B cell (primary cell): ENCODE measurements at regions of chr20 and their contacts with region 1.

Region 1: DNA sequence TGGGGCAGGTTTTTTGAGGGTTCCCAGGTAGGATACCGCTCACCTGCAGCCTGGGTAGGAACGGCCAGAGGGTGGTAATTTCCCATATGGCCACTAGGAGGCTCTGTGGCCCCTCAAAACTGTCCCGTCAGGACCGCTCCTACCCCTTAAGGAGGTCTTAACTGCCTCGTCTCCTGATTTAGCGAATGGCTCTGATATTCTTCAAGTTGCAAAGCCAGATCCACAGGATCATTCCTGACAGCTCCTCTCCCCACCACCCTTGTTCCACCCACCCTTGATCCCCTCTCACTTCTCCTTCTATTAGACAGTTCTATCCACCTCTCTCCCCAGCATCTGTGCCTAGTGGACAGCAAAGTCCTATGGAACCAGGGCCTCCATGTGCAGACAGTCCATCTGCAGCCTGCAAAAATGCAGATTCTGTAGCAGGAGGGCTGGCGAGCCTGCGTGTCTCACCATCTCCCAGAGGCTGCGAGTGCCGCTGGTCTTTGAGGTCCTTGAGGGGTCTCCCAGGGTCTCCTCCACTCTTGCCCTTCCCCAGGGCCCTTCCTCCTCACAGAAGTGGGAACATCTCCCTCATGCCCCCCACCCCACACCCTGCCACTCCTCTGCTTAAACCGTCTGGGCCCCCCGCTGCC is 34.3 kb upstream of the ZBP1 start:
- DNase-seq: peak; percentile 85
- ATAC-seq: peak; percentile 94
- H3K4me3 ChIP-seq: no peak overlapping the region
- H3K4me3 Mint-ChIP-seq: no peak overlapping the region
- H3K27ac ChIP-seq: no peak overlapping the region
- H3K27ac Mint-ChIP-seq: no peak overlapping the region
- H3K4me1 ChIP-seq: peaks cover 4 to 18% of the 10 kb centered on the region in 2 donors
- H3K4me1 Mint-ChIP-seq: peaks cover 34% of the 10 kb centered on the region
- H3K27me3 ChIP-seq: no peaks in the 10 kb centered on the region
- H3K27me3 Mint-ChIP-seq: no peaks in the 10 kb centered on the region
- CTCF ChIP-seq: peak; percentile 95

Region 2: DNA sequence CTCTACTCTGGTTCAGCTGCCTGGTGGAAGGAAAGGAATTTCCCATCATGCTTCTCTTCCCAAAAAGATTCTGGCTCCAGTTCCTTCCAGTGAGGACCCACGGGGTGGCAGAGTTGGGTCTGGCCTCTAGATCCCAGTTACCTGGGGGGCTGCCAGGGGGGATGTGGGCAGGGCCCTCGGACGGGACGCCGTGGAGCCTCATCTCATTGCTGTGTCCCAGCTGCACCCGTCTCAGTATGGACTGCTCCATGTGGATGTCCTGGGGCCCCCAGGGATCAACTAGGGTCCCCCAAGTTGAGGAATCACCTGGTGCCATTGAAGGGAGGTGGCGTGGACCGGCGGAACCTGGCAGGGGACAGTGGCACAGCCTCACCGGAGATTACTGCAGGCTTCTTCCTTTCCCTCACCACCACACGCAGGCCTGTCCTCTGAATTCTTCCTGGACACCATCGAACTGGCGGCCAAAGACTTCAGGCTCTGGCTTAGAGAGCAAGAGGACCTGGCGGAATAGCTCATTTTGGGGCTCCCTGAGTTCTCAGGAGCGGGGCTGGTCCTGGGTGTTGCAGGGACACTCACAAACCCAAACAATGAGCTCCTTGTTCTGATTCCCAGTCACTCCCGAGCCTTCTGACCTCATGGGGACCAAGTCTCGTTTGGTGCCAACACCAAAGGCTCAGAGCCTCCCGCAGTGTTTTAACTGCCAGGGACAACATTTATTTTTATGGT is 42.7 kb before region 1 on chr20:
- CTCF ChIA-PET with region 1: interaction called, 18 read pairs
- POLR2A ChIA-PET with region 1: no interaction called
- intact Hi-C with region 1: no loop called
- DNase-seq: no peak
- ATAC-seq: no peak
- H3K4me3 ChIP-seq: no peak overlapping the region
- H3K4me3 Mint-ChIP-seq: no peak overlapping the region
- H3K27ac ChIP-seq: no peak overlapping the region
- H3K27ac Mint-ChIP-seq: no peak overlapping the region
- H3K4me1 ChIP-seq: peaks cover 5 to 15% of the 10 kb centered on the region in 2 donors
- H3K4me1 Mint-ChIP-seq: peaks cover 17% of the 10 kb centered on the region
- H3K27me3 ChIP-seq: no peaks in the 10 kb centered on the region
- H3K27me3 Mint-ChIP-seq: no peaks in the 10 kb centered on the region
- CTCF ChIP-seq: no peak

Region 3: DNA sequence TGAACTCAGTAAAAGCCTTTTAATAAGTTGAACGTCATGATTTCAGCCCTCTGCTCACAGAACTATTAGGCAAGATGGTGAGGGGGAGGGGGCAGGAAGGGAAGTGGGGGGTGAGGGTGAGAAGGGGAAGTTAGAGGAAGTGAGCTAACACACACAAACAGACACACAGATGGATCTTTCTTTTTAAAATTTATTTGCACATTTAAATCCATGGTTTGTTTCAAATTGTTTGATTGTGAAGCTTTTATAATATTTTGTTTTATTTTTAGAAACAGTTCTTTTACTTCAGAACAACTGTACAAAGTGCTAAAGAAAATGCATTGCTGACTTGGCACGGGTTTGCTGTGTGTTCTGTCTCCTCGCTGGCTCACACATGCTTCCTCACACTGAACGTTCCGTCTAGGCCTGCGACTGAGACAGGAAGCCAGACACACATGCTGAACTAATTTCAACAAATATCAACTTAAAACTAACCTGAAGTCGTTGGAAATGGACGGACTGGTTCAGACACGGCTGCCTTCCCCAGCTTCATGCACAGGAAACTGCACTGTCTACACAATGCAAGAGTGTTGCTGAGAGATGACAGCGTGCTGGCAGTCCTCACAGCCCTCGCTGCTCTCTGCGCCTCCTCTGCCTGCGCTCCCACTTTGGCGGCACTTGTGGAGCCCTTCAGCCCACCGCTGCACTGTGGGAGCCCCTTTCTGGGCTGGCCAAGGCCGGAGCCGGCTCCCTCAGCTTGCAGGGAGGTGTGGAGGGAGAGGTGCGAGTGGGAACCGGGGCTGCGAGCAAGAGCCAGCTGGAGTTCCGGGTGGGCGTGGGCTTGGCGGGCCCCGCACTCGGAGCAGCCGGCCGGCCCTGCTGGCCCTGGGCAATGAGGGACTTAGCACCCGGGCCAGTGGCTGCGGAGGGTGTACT is 26.2 kb before region 1 on chr20:
- CTCF ChIA-PET with region 1: interaction called, 100 read pairs
- POLR2A ChIA-PET with region 1: interaction called, 4 read pairs
- intact Hi-C with region 1: no loop called
- DNase-seq: peak; percentile 82
- ATAC-seq: peak; percentile 78
- H3K4me3 ChIP-seq: peak overlapping the region; percentile 18 to 59 (median 39)
- H3K4me3 Mint-ChIP-seq: peak overlapping the region; percentile 84
- H3K27ac ChIP-seq: peak overlapping the region; percentile 78 to 81
- H3K27ac Mint-ChIP-seq: peak overlapping the region; percentile 93
- H3K4me1 ChIP-seq: peaks cover 31 to 38% of the 10 kb centered on the region in 2 donors
- H3K4me1 Mint-ChIP-seq: peaks cover 41% of the 10 kb centered on the region
- H3K27me3 ChIP-seq: peaks cover 0 to 6% (median 2%) of the 10 kb centered on the region in 4 experiments
- H3K27me3 Mint-ChIP-seq: peaks cover 12% of the 10 kb centered on the region
- CTCF ChIP-seq: no peak

Region 4: DNA sequence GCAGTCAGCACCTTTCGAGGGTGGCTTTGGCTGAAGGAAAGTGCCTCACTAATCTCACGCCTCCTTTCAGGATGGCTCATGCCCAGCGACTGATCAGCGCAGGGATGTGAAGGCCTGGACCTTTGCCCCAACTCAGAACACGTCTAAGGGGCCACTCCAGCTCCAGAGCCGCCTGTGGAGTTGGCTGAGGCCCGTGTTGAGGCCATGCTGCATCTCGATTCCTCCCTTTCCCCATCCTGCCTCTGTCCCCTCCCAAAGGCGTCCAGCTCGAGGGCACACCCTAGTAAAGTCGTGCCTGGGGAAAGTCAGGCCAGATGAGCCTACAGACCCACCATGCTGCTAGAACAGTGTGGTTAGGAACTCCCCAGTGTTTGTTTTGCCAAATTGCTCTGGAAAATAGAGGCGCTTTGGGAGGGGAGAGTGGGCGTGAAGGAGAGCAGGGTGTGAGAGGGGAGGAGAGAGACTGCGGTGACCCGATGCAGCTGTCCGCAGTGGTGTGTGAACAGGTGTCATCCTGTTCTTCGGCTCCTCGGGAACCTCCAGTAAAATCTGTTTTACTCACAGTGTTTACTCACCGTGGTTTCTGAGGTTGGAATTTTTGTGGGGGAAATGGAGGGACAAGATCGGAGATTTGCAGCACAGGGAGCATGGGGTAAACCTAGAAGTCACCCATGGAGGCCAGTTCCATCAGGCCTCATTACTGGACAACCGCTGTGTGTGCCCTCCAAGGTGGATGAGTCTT is 140.3 kb after region 1 on chr20:
- CTCF ChIA-PET with region 1: no interaction called
- POLR2A ChIA-PET with region 1: no interaction called
- intact Hi-C with region 1: no loop called
- DNase-seq: no peak
- ATAC-seq: no peak
- H3K4me3 ChIP-seq: no peak overlapping the region
- H3K4me3 Mint-ChIP-seq: no peak overlapping the region
- H3K27ac ChIP-seq: no peak overlapping the region
- H3K27ac Mint-ChIP-seq: no peak overlapping the region
- H3K4me1 ChIP-seq: no peaks in the 10 kb centered on the region
- H3K4me1 Mint-ChIP-seq: peaks cover 2% of the 10 kb centered on the region
- H3K27me3 ChIP-seq: no peaks in the 10 kb centered on the region
- H3K27me3 Mint-ChIP-seq: peaks cover 14% of the 10 kb centered on the region
- CTCF ChIP-seq: no peak

Region 5: DNA sequence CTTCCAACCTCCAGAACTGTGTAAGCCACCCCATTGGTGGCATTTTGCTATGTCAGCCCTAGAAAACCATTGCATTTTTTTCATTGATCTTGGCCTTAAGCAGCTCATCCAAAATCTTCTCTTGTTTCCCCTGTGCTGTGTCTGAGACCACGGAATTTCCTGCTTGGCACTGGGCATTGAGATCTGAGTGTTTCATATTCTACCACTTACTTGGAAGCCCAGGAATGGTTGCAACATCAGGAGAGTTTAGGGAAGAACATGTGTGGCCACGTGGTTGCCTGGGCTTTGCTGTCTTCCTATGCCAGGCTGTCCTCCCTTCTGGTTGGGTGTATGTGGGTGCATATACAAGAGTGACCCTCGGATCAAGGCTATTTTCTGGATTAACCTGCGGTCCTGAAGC is 194.6 kb after region 1 on chr20:
- CTCF ChIA-PET with region 1: no interaction called
- POLR2A ChIA-PET with region 1: no interaction called
- intact Hi-C with region 1: loop called (anchors 10 kb)
- DNase-seq: no peak
- ATAC-seq: no peak
- H3K4me3 ChIP-seq: no peak overlapping the region
- H3K4me3 Mint-ChIP-seq: no peak overlapping the region
- H3K27ac ChIP-seq: no peak overlapping the region
- H3K27ac Mint-ChIP-seq: no peak overlapping the region
- H3K4me1 ChIP-seq: no peaks in the 10 kb centered on the region
- H3K4me1 Mint-ChIP-seq: no peaks in the 10 kb centered on the region
- H3K27me3 ChIP-seq: no peaks in the 10 kb centered on the region
- H3K27me3 Mint-ChIP-seq: peaks cover 32% of the 10 kb centered on the region
- CTCF ChIP-seq: no peak

Region 6: GRCh38 chr20:58179432-58180099 is 525.1 kb after region 1 on chr20:
- CTCF ChIA-PET with region 1: interaction called, 50 read pairs
- POLR2A ChIA-PET with region 1: no interaction called
- intact Hi-C with region 1: loop called (anchors 1 kb)
- DNase-seq: peak; percentile 79
- ATAC-seq: peak; percentile 90
- H3K4me3 ChIP-seq: peak overlapping the region in 2 of 5 experiments; percentile 15 to 25
- H3K4me3 Mint-ChIP-seq: peak overlapping the region; percentile 34
- H3K27ac ChIP-seq: no peak overlapping the region
- H3K27ac Mint-ChIP-seq: no peak overlapping the region
- H3K4me1 ChIP-seq: peaks cover 10 to 14% of the 10 kb centered on the region in 2 donors
- H3K4me1 Mint-ChIP-seq: peaks cover 9% of the 10 kb centered on the region
- H3K27me3 ChIP-seq: peaks cover 0 to 47% (median 15%) of the 10 kb centered on the region in 4 experiments
- H3K27me3 Mint-ChIP-seq: peaks cover 49% of the 10 kb centered on the region
- CTCF ChIP-seq: peak; percentile 100